HEK293 (cell line): ENCODE measurements at regions of chr5 and their contacts with region 1.

Region 1: DNA sequence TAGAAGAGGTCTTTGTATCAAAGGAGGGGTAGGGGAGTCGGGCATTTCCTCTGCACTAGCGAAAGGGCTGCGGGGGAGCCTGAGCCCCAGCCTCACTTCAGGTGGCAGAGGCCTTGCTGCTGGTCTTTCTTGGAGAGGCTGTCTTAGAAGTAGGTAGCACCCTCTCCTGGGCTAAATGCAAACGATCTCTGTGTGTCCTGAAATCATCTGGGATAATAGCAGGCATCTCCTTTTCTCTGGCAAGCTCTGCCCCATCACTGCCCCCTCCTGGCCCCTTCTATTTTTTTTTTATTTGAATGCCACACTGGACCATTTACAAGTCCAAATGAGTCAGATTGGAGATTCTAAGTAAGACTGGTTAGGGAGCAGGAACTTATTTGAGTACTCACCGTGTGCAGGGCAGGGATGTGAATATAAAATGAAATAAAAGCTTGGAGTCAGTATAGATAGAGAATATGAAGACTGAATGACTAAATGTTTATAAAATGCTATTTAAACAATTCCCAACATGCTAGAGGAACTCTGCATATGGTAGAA is 137.1 kb downstream of the FGF1 start:
- H3K4me3 ChIP-seq: no peak overlapping the region
- H3K27ac ChIP-seq: no peak overlapping the region
- H3K4me1 ChIP-seq: peaks cover 2% of the 10 kb centered on the region; the same call in 1 of the 2 replicates
- CTCF ChIP-seq: peak; percentile 95

Region 2: DNA sequence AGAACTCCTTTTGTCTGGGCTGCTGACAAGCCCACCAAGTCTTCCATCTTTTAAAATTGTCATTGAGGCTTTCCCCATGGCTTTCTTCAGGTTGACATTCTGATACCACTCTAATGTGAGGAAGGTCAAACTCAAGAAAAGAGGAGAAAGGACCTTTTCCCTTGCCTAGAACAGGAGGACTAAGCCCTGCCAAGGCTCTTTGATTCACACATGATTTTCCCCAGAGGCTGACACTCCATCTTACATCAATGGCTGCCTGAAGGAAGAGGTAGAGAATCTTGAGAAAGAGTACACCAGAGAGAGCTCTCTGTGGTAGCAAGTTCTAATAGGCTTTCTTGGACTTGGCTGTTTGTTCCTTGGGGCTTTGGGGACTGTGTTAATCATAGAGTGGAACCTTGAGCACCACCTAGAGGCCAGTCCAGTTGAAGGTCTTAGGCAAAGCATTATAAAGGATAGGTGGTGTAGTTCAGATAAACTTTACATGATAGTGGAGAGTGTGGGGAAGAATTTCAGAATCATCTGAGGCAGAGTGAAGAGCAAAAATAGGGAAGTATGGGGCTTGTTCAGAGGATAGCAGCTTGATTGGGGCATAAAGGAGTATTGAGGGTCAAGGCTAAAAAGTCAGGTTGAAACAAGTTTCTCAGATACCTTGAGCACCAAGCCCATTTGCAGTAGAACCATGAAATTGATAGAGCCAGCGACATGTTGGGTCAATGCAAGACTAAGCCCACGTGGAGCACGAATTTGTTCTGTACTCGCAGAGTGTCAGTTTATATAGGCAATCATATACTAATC is 403.5 kb before region 1 on chr5:
- CTCF ChIA-PET with region 1: interaction called, 23 read pairs
- POLR2A ChIA-PET with region 1: no interaction called
- H3K4me3 ChIP-seq: no peak overlapping the region
- H3K27ac ChIP-seq: no peak overlapping the region
- H3K4me1 ChIP-seq: no peaks in the 10 kb centered on the region
- CTCF ChIP-seq: no peak

Region 3: GRCh38 chr5:142151436-142152383 is 397.1 kb before region 1 on chr5:
- CTCF ChIA-PET with region 1: interaction called, 34 read pairs
- POLR2A ChIA-PET with region 1: no interaction called
- H3K4me3 ChIP-seq: no peak overlapping the region
- H3K27ac ChIP-seq: no peak overlapping the region
- H3K4me1 ChIP-seq: peaks cover 3% of the 10 kb centered on the region; the same call in 1 of the 2 replicates
- CTCF ChIP-seq: peak; percentile 54; the same call in 1 of the 2 replicates

Region 4: GRCh38 chr5:142156839-142157463 is 391.9 kb before region 1 on chr5:
- CTCF ChIA-PET with region 1: interaction called, 34 read pairs
- POLR2A ChIA-PET with region 1: no interaction called
- H3K4me3 ChIP-seq: no peak overlapping the region
- H3K27ac ChIP-seq: no peak overlapping the region
- H3K4me1 ChIP-seq: peaks cover 14% of the 10 kb centered on the region
- CTCF ChIP-seq: no peak

Region 5: GRCh38 chr5:142800776-142801494 is 252.1 kb after region 1 on chr5:
- CTCF ChIA-PET with region 1: no interaction called
- POLR2A ChIA-PET with region 1: no interaction called
- H3K4me3 ChIP-seq: no peak overlapping the region
- H3K27ac ChIP-seq: no peak overlapping the region
- H3K4me1 ChIP-seq: 0 out of 2 replicates have a peak, but pooled peaks cover 2% of the 10 kb centered on the region
- CTCF ChIP-seq: no peak